Transverse colon (tissue), 4 donors: ENCODE measurements at regions of chr15 and their contacts with region 1.

Region 1: DNA sequence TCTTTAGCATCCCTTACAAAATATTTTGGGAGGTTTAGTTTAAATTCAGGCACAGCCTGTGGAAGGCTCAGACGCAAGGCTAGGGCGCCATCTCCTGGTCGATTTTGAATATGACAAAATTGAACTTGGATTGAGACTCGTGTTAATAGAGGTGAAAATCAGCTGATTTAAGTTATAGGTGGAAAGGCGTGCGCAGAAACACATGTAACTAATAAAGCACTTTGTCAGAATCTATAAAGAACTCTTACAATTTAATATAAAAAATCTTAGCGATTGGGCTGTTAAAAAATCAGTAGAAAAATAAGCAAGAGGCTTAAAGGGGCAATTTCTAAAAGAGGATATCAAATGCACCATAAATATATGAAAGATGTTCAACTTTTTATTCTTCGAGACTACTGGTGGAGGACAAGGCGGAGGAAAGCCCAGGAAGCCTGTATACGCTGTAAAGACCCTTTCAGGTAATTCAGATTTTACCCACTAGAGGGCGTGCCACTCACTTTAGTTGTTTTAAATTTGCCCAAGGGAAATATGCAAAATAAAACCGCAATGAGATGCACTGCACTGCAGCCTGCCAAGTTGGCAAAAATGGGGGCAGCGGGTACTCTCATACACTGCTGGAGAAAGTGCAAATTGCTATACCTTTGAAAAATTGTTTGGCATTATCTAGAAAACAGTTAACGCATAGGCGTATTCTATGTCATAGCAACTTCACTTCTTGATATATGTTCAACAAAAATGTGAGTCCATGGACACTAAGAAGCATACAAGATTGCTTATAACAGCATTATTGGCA is 64.7 kb downstream of the SLC30A4 start:
- DNase-seq: peak; percentile 79
- H3K4me3 ChIP-seq: peak overlapping the region in 3 of 4 donors; percentile 17 to 45 (median 23)
- H3K27ac ChIP-seq: peak overlapping the region; percentile 77 to 85 (median 82)
- H3K4me1 ChIP-seq: peaks cover 6 to 57% (median 40%) of the 10 kb centered on the region in 4 donors
- H3K27me3 ChIP-seq: no peaks in the 10 kb centered on the region
- CTCF ChIP-seq: peak; percentile 73 to 95 (median 88)
- EP300 ChIP-seq: no peak
- POLR2A ChIP-seq: no peak

Region 2: GRCh38 chr15:45510758-45511280 is 53.0 kb after region 1 on chr15:
- in situ Hi-C with region 1: no loop called
- intact Hi-C with region 1: no loop called
- DNase-seq: no peak
- H3K4me3 ChIP-seq: no peak overlapping the region
- H3K27ac ChIP-seq: no peak overlapping the region
- H3K4me1 ChIP-seq: no peaks in the 10 kb centered on the region
- H3K27me3 ChIP-seq: no peaks in the 10 kb centered on the region
- CTCF ChIP-seq: no peak
- EP300 ChIP-seq: no peak
- POLR2A ChIP-seq: no peak

Region 3: GRCh38 chr15:45611305-45611704 is 153.5 kb after region 1 on chr15:
- in situ Hi-C with region 1: loop called (anchors 10 to 25 kb)
- intact Hi-C with region 1: no loop called
- DNase-seq: no peak
- H3K4me3 ChIP-seq: no peak overlapping the region
- H3K27ac ChIP-seq: no peak overlapping the region
- H3K4me1 ChIP-seq: no peaks in the 10 kb centered on the region
- H3K27me3 ChIP-seq: no peaks in the 10 kb centered on the region
- CTCF ChIP-seq: peak in 4 of 5 experiments; percentile 27 to 38 (median 33)
- EP300 ChIP-seq: no peak
- POLR2A ChIP-seq: no peak

Region 4: DNA sequence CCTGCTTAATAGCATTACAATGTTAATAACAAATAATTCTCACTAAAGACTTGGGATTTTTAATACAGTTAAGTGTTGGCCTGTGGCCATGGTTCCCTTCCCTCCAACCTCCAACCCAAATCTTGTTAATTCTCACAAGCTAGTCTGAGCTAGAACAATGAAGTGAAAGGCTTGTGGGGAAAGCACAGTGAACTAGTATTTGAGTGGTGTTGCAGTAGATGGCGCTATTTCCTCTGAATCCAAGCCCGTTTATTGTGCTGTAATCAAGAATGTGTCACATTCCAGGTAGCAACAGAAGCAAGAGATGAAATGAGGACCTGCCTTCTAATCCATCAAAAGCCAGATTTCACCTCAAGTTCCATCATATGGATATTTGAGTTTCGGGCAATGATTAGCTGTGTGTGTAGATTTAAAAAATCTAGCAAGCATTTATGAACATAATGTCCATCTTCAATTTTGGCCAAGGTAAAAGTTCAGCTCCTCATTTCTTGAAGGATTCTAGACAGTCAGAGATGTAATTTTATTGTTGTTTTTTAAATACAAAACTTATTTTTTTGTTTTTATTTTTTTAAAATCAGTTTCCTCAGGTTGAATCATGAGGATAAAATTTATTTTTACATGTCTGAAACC is 337.7 kb after region 1 on chr15:
- in situ Hi-C with region 1: no loop called
- intact Hi-C with region 1: no loop called
- DNase-seq: peak; percentile 48
- H3K4me3 ChIP-seq: no peak overlapping the region
- H3K27ac ChIP-seq: no peak overlapping the region
- H3K4me1 ChIP-seq: peaks cover 0 to 19% (median 3%) of the 10 kb centered on the region in 4 donors
- H3K27me3 ChIP-seq: no peaks in the 10 kb centered on the region
- CTCF ChIP-seq: peak; percentile 49 to 78 (median 58)
- EP300 ChIP-seq: no peak
- POLR2A ChIP-seq: no peak